Activated CD4-positive, alpha-beta T cell treated with anti-CD3 and anti-CD28 coated beads for 36 hours (primary cell): ENCODE measurements at regions of chr12 and their contacts with region 1.

Region 1: DNA sequence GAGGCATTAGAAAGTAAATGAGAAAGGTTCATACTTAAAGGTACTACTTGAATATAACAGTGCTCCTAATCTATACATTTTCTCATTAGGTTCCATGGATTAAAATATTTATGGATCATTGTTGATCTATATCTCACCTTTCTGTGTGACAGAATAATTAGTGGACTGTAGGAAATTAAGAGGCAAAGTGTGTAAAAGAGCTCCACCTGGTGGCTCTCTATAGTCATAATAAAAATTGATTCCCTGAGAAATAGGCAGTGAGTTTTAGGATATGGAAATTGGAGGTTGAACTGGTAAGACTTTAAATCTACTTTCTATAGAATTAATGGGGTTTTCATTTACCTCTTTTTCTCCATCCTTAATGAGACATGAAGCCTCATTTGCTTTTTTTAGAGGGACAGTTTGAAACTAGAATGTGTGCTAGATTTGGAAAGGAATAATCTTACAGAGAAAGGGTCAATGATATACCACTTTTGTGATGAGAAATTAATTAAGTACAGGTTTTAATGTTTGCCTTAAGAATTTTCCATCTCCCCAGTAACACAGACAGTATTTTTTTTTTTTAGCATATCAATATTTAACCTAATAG is 11.8 kb upstream of the DERA start:
- DNase-seq: no peak
- ATAC-seq: no peak
- H3K4me3 Mint-ChIP-seq: no peak overlapping the region
- H3K27ac Mint-ChIP-seq: no peak overlapping the region
- H3K4me1 Mint-ChIP-seq: peaks cover 2% of the 10 kb centered on the region
- H3K27me3 Mint-ChIP-seq: no peaks in the 10 kb centered on the region

Region 2: DNA sequence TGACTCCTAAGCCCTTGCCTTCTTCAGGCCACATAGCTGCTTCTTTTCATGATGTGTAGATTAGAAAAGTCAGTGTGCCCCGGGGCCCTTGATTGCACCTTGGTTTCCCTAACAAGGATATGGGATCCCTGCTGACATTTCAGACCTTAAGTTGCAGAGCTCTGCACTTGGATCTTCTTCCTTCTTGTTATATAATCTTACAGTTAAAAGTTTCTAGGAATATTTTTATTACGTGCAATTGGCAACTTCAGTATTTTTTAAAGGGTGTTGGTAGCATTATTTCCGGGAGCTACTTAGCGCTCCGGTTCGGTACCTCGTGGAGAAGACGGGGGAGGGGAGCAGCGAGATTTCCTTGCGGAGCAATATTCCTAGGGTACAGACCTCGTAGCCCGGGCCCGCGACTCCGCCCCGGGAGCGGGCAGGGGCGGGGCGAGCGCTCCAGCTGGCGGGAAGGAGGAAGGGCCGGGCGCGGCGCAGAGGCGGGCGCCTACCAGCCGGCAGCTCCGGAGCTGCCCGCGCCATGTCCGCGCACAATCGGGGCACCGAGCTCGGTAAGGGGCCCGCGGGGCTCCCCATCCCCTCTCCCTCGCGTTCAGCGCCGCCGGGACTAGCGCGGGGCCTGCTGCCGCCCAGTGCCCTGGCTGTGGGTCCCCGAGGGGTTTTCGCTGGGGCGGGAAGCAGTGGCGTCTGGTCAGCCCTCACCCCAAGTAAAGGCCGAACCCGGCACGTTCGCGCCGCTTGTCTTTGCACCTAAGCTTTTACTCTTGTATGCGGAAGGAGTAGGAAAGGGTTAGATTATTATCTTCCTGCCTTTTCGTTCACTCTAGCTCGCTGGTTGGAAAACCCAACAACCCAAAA is 11.7 kb after region 1 on chr12 and contains the start of gene DERA:
- CTCF ChIA-PET with region 1: interaction called, 45 read pairs
- POLR2A ChIA-PET with region 1: no interaction called
- intact Hi-C with region 1: no loop called
- DNase-seq: peak; percentile 74
- ATAC-seq: peak; percentile 95
- H3K4me3 Mint-ChIP-seq: peak within 1 kb of the TSS; percentile 80
- H3K27ac Mint-ChIP-seq: peak within 1 kb of the TSS; percentile 83
- H3K4me1 Mint-ChIP-seq: peaks cover 7% of the 10 kb centered on the region
- H3K27me3 Mint-ChIP-seq: no peaks in the 10 kb centered on the region
- total RNA-seq, gene DERA: 30.9 to 35.7 TPM